ENCODE measurements at regions of chr17 and their contacts with region 1.

Region 1: GRCh38 chr17:72404872-72405271 is 284.1 kb downstream of the SOX9 start:
- DNase-seq: no peak
- H3K4me3 ChIP-seq: no peak overlapping the region
- H3K4me3 Mint-ChIP-seq: no peak overlapping the region
- H3K27ac Mint-ChIP-seq: peak overlapping the region; percentile 97
- H3K4me1 ChIP-seq: peaks cover 93% of the 10 kb centered on the region
- H3K4me1 Mint-ChIP-seq: peaks cover 60% of the 10 kb centered on the region
- H3K27me3 ChIP-seq: no peaks in the 10 kb centered on the region
- H3K27me3 Mint-ChIP-seq: no peaks in the 10 kb centered on the region
- CTCF ChIP-seq: no peak

Region 2: DNA sequence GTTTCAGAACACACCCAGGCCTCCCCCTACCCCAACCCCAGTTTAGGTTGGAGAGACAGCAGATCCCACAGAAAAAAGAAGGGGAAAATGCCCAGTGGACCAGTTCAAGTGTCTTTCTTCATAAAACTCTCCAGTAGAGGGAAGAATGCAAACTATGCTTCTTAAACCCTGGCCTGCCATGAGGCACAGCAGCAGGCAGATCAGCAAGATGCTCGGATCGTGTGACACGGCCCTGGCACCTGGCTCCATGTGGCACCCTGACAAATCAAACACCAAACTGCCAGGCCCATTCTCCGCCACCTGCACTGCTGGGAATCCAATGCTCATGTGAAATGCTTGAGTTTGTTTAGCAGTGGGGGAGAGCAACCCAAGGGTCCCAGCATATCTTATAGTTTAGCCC is 117.3 kb before region 1 on chr17:
- CTCF ChIA-PET with region 1: no interaction called
- POLR2A ChIA-PET with region 1: no interaction called
- intact Hi-C with region 1: loop called (anchors 5 kb)
- DNase-seq: no peak
- H3K4me3 ChIP-seq: no peak overlapping the region
- H3K4me3 Mint-ChIP-seq: no peak overlapping the region
- H3K27ac Mint-ChIP-seq: no peak overlapping the region
- H3K4me1 ChIP-seq: no peaks in the 10 kb centered on the region
- H3K4me1 Mint-ChIP-seq: peaks cover 12% of the 10 kb centered on the region
- H3K27me3 ChIP-seq: no peaks in the 10 kb centered on the region
- H3K27me3 Mint-ChIP-seq: no peaks in the 10 kb centered on the region
- CTCF ChIP-seq: no peak

Region 3: DNA sequence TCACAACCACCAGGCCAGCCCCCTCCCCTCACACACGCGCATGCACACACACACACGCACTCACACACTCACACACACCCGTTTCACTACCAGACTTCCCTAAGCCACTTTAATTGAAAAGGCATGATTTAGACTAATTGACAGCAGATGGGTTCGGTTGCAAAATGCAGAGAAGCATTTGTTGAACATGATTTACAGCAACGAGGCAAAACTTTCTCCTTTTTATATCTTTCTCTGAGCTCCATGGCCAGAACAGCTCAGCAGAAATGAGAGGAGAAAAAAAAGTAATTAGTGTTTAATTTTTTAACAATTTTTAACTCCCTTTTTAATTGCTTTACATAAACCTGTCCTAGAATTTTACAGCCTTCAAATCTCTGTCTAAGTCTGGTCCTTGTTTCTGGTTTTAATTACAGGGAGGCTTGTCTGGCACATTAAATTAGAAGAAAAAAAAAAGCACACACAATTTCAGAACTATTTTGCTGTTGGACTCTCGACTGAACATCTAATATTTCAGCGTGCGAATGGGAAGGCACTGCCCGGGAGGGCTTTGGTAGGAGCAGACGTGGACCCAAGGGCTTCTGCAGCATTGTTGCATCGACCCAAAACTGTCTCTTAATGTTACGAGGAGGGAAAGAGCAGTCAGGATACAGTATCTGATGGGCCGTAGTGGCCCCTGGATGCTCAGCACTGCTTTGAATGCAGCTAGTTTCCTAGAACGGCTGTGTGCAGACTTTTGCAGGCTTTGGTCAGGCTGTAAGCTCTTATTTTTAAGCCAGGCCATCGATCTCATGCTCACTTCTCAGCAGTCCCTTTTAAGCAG is 28.1 kb before region 1 on chr17:
- CTCF ChIA-PET with region 1: no interaction called
- POLR2A ChIA-PET with region 1: no interaction called
- intact Hi-C with region 1: no loop called
- DNase-seq: no peak
- H3K4me3 ChIP-seq: no peak overlapping the region
- H3K4me3 Mint-ChIP-seq: no peak overlapping the region
- H3K27ac Mint-ChIP-seq: no peak overlapping the region
- H3K4me1 ChIP-seq: no peaks in the 10 kb centered on the region
- H3K4me1 Mint-ChIP-seq: no peaks in the 10 kb centered on the region
- H3K27me3 ChIP-seq: no peaks in the 10 kb centered on the region
- H3K27me3 Mint-ChIP-seq: no peaks in the 10 kb centered on the region
- CTCF ChIP-seq: no peak

Measured in Caco-2 (cell line).